WTC11 (cell line): ENCODE measurements at regions of chr19 and their contacts with region 1.

Region 1: GRCh38 chr19:34096020-34096915 is 76.0 kb upstream of the LSM14A start:
- DNase-seq: peak; percentile 16
- ATAC-seq: peak; percentile 76
- H3K4me3 Mint-ChIP-seq: peak overlapping the region; percentile 56
- H3K27ac Mint-ChIP-seq: no peak overlapping the region; the same call in 1 of the 2 replicates
- H3K4me1 Mint-ChIP-seq: peaks cover 11% of the 10 kb centered on the region; the same call in 1 of the 2 replicates
- H3K27me3 Mint-ChIP-seq: no peaks in the 10 kb centered on the region
- CTCF ChIP-seq: peak; percentile 62

Region 2: GRCh38 chr19:33819880-33820781 is 276.1 kb before region 1 on chr19:
- CTCF ChIA-PET with region 1: interaction called, 10 read pairs
- POLR2A ChIA-PET with region 1: no interaction called
- DNase-seq: peak; percentile 83
- ATAC-seq: peak; percentile 86
- H3K4me3 Mint-ChIP-seq: peak overlapping the region; percentile 73
- H3K27ac Mint-ChIP-seq: no peak overlapping the region
- H3K4me1 Mint-ChIP-seq: peaks cover 13% of the 10 kb centered on the region
- H3K27me3 Mint-ChIP-seq: peaks cover 12% of the 10 kb centered on the region
- CTCF ChIP-seq: no peak

Region 3: GRCh38 chr19:33947265-33947964 is 148.9 kb before region 1 on chr19:
- CTCF ChIA-PET with region 1: interaction called, 11 read pairs
- POLR2A ChIA-PET with region 1: no interaction called
- DNase-seq: no peak
- ATAC-seq: no peak; the same call in 1 of the 2 replicates
- H3K4me3 Mint-ChIP-seq: no peak overlapping the region
- H3K27ac Mint-ChIP-seq: no peak overlapping the region
- H3K4me1 Mint-ChIP-seq: peaks cover 17% of the 10 kb centered on the region
- H3K27me3 Mint-ChIP-seq: peaks cover 2% of the 10 kb centered on the region; the same call in 1 of the 2 replicates
- CTCF ChIP-seq: no peak

Region 4: DNA sequence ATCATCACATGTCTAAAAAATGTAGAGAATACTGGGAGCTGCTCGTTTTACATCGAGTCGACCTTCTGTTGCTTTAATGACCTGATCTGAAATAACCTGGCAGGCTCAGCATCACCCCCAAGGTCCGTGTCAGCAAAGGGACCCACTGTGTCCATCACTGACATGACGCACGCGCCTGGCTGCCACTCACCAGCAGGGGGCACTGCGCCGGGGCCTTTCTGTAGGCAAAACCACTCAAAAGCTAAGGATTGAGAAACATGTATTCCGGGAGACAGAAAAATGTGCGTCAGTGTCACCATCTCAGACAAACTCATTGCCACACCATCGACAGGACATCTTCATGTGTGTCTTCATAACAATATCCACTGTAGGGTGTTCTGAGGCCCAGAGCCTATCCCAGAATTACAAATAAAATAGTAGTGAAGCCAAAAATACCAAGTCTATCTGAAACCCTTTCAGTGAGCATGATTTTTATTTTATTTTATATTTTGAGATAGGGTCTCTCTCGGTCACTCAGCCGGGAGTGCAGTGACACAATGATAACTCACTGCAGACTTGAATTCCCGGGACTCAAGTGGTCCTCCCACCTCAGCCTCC is 54.2 kb before region 1 on chr19:
- CTCF ChIA-PET with region 1: interaction called, 75 read pairs
- POLR2A ChIA-PET with region 1: no interaction called
- DNase-seq: peak; percentile 91
- ATAC-seq: peak; percentile 72
- H3K4me3 Mint-ChIP-seq: no peak overlapping the region
- H3K27ac Mint-ChIP-seq: no peak overlapping the region
- H3K4me1 Mint-ChIP-seq: no peaks in the 10 kb centered on the region
- H3K27me3 Mint-ChIP-seq: no peaks in the 10 kb centered on the region; the same call in 1 of the 2 replicates
- CTCF ChIP-seq: peak; percentile 93

Region 5: DNA sequence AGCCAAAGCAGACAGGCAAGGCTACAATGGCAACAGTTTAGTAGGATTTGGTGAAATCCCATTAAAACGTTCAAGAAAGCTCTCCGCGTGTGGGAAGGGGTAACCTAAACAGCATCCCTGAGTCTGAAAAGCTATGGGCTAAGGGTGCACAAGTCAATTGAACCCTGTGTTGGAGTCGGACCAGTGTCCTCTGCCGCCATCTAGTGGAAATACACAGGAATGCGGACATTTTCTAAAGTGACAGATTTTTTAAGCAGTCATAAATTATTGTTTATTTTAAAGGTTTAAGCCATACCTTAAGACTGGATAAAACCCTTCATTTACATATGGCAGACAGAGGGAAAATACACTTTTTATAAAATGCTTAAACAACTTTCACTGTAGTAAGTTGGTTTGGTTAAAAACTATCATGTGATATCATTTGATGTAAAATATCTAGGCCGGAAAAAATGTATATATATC is 49.5 kb after region 1 on chr19:
- CTCF ChIA-PET with region 1: interaction called, 22 read pairs
- POLR2A ChIA-PET with region 1: no interaction called
- DNase-seq: peak; percentile 49
- ATAC-seq: peak; percentile 84
- H3K4me3 Mint-ChIP-seq: no peak overlapping the region
- H3K27ac Mint-ChIP-seq: no peak overlapping the region
- H3K4me1 Mint-ChIP-seq: peaks cover 10% of the 10 kb centered on the region; the same call in 1 of the 2 replicates
- H3K27me3 Mint-ChIP-seq: no peaks in the 10 kb centered on the region
- CTCF ChIP-seq: peak; percentile 78